Panc1 (cell line): ENCODE measurements at regions of chr9 and their contacts with region 1.

Region 1: DNA sequence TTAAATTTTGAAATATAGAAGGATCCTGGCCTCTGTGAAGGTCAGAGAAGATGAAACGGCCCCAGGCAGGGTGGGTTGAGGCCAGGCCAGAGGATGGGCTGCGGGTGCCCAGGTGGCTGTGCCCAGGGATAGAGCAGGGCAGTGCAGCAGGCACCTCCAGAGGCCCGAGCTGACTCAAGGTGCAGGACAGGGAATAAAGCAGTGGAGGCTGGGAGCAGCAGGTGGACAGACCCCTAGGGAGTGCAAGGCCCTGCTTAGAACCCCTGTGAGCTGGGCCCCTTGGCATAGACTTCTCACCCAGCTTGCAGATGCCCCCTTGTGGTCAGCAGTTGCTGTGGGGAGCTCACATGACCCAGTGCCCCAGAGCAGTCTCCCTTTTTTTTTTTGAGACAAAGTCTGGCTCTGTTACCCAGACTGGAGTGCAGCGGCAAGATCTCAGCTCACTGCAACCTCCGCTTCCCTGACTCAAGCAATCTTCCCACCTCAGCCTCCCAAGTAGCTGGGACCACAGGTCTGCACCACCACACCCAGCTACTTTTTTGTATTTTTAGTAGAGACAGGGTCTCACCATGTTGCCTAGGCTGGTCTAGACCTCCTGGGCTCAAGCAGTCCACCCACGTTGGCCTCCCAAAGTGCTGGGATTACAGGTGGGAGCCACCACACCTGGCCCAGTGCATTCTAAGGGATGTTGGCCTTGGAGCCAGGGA is 118.8 kb downstream of the WNK2 start:
- DNase-seq: peak; percentile 17
- ATAC-seq: peak; percentile 71
- H3K4me3 ChIP-seq: no peak overlapping the region
- H3K27ac ChIP-seq: no peak overlapping the region
- H3K4me1 ChIP-seq: no peaks in the 10 kb centered on the region
- H3K27me3 ChIP-seq: no peaks in the 10 kb centered on the region
- CTCF ChIP-seq: peak; percentile 80

Region 2: GRCh38 chr9:92870289-92870688 is 432.4 kb before region 1 on chr9:
- CTCF ChIA-PET with region 1: no interaction called
- POLR2A ChIA-PET with region 1: no interaction called
- in situ Hi-C with region 1: no loop called
- intact Hi-C with region 1: no loop called
- DNase-seq: no peak
- ATAC-seq: no peak
- H3K4me3 ChIP-seq: no peak overlapping the region
- H3K27ac ChIP-seq: no peak overlapping the region
- H3K4me1 ChIP-seq: no peaks in the 10 kb centered on the region
- H3K27me3 ChIP-seq: no peaks in the 10 kb centered on the region
- CTCF ChIP-seq: no peak

Region 3: DNA sequence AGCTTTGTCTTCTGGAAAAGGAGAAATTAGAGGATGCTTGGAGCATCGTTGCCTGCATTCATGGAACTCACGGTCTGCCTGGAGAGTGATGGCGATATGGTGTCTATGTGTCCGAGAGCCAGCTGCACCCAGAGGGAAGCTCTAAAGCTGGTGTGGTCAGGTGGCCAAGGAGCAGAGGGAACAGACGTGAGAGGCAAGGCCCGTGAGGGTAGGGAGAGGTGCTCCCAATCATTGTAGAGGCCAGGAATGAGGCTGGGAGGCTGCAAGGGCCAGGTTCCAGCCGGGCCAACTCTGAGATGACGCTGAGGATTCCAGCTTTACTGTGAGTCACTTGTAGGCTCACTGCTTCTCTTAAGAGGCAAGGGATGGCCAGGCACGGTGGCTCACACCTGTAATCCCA is 347.8 kb before region 1 on chr9:
- CTCF ChIA-PET with region 1: no interaction called
- POLR2A ChIA-PET with region 1: no interaction called
- in situ Hi-C with region 1: no loop called
- intact Hi-C with region 1: loop called (anchors 5 kb)
- DNase-seq: no peak
- ATAC-seq: no peak
- H3K4me3 ChIP-seq: no peak overlapping the region
- H3K27ac ChIP-seq: no peak overlapping the region
- H3K4me1 ChIP-seq: no peaks in the 10 kb centered on the region
- H3K27me3 ChIP-seq: no peaks in the 10 kb centered on the region
- CTCF ChIP-seq: no peak

Region 4: DNA sequence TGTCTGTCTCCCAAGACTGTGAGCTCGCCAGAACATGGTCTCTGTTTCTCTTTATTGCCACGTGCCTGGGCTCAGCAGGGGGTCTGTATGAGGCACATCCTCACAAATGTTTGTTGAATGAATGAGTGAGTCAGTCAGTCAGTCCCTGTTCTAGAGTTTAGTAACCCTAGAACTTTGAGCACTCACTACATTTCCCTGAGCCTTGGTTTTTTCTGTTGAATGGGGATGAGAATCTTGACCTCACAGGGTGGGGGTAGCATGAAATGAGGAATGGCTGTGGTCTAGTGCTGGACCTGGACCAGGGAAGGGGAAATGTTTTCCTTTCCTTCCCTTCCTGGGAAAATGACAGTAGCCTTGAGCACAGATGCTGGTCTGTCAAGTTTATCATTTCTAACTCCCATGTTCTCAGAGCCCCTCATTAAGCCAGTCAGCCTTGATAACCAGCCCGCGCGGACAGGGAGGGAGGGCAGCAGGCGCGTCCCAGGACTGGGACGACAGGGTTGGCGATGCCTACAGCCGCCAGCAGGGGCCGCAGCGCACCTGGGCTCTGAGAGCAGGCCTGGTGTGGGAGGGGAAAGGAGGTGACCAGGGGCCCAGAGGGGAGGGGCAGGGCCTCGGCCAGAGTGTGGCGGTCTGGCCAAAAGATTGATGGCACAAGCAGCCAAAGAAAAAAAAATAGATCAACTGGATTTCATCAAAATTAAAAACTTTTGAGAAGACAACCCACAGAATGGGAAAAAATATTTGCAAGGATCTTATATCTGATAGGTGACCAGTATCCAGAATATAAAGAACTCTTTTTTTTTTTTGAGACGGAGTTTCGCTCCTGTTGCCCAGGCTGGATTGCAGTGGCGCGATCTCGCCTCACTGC is 142.9 kb before region 1 on chr9:
- CTCF ChIA-PET with region 1: interaction called, 5 read pairs
- POLR2A ChIA-PET with region 1: no interaction called
- in situ Hi-C with region 1: no loop called
- intact Hi-C with region 1: loop called (anchors 2 kb)
- DNase-seq: no peak
- ATAC-seq: peak; percentile 99
- H3K4me3 ChIP-seq: no peak overlapping the region; a peak in 1 of 4 replicates
- H3K27ac ChIP-seq: no peak overlapping the region
- H3K4me1 ChIP-seq: no peaks in the 10 kb centered on the region
- H3K27me3 ChIP-seq: no peaks in the 10 kb centered on the region
- CTCF ChIP-seq: peak; percentile 96

Region 5: GRCh38 chr9:93397661-93398373 is 95.1 kb after region 1 on chr9:
- CTCF ChIA-PET with region 1: no interaction called
- POLR2A ChIA-PET with region 1: no interaction called
- in situ Hi-C with region 1: no loop called
- intact Hi-C with region 1: no loop called
- DNase-seq: no peak
- ATAC-seq: no peak
- H3K4me3 ChIP-seq: no peak overlapping the region
- H3K27ac ChIP-seq: no peak overlapping the region
- H3K4me1 ChIP-seq: no peaks in the 10 kb centered on the region
- H3K27me3 ChIP-seq: no peaks in the 10 kb centered on the region
- CTCF ChIP-seq: no peak

Region 6: DNA sequence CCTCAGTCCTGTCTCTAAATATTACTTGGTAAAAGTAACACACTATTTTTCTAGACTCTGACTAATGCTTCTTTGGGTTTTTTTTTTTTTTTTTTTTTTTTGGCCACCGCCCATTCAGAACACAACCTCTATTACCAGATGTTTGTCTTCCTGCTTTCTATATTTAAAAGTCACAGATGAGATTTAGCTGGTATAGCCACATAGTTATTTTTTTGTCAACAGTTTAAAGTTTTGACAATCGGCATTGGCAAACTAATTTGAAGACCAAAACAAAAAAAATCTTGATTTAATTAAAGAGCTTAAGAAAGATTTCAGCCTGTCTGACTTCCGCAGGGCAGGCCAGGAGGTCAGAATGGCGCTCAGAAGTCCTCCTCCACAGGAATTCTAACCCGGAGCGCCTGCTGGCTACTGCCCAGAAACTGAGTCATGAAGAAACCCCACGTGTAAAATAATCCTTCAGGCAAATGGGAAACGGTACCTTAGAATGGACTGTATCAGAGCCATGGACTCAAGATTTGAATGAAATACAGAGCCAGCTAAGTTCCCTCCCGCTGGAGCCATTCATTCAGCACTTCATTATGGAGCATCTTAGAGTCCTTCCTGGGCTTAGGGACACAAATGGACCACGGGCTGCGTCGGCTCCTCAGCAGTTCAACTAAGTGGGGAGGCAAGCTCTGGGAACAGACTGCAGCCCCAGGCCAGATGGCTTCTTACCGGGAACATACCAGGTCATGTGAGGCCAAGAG is 837.1 kb after region 1 on chr9:
- CTCF ChIA-PET with region 1: no interaction called
- POLR2A ChIA-PET with region 1: interaction called, 14 read pairs
- in situ Hi-C with region 1: no loop called
- intact Hi-C with region 1: no loop called
- DNase-seq: peak; percentile 33
- ATAC-seq: peak; percentile 91
- H3K4me3 ChIP-seq: peak overlapping the region; percentile 4 to 24; a peak in 1 of 4 replicates
- H3K27ac ChIP-seq: peak overlapping the region; percentile 76
- H3K4me1 ChIP-seq: peaks cover 23% of the 10 kb centered on the region; the same call in 1 of the 2 replicates
- H3K27me3 ChIP-seq: no peaks in the 10 kb centered on the region
- CTCF ChIP-seq: no peak